RWPE1 (cell line): ENCODE measurements at regions of chr5 and their contacts with region 1.

Region 1: DNA sequence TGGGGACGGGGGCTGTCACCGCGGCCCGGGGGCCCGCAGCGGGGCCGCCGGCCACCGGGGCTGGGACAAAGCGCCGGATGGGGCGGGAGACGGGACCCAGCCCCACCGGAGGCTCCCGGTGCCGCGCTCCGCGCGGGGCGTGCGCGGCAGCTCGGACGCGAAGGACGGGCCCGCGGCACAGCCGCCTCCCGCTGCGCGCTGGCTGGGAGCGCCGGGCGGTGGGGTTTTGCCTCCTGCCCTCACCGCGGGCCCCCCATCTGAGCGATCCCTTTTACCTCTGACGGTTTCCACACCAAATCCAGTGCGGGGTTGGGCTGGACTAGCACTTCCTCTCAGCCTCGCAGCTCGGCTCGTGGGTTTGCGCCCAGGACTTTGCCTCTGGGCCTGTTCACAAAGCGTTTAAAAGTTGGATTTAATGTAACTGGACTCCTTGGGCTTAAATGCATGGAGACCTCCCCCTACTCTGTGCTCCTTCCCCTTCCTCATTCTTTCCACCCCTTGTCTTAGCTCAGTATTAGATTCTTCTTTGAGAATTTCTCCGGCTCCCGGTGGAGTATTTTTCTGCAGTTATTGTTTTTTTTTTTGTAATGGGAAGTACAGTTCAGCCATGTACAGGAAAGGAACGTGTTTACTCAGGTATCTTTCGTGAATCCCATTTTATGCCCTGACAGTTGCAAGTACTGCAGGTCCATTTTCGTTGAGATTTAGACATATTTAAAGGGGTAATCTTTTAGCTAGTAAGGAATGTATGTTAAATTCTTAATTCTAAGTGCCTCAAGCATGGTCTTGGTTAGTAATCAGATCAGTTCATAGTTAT is 691 bp downstream of the FCHO2 start:
- DNase-seq: peak; percentile 57
- H3K27ac ChIP-seq: peak overlapping the region; percentile 97
- CTCF ChIP-seq: no peak

Region 2: GRCh38 chr5:73170522-73170921 is 214.0 kb after region 1 on chr5:
- CTCF ChIA-PET with region 1: interaction called, 10 read pairs
- POLR2A ChIA-PET with region 1: no interaction called
- DNase-seq: no peak
- H3K27ac ChIP-seq: no peak overlapping the region
- CTCF ChIP-seq: no peak; the same call in 1 of the 2 replicates